ENCODE measurements at regions of chr22 and their contacts with region 1.

Region 1: DNA sequence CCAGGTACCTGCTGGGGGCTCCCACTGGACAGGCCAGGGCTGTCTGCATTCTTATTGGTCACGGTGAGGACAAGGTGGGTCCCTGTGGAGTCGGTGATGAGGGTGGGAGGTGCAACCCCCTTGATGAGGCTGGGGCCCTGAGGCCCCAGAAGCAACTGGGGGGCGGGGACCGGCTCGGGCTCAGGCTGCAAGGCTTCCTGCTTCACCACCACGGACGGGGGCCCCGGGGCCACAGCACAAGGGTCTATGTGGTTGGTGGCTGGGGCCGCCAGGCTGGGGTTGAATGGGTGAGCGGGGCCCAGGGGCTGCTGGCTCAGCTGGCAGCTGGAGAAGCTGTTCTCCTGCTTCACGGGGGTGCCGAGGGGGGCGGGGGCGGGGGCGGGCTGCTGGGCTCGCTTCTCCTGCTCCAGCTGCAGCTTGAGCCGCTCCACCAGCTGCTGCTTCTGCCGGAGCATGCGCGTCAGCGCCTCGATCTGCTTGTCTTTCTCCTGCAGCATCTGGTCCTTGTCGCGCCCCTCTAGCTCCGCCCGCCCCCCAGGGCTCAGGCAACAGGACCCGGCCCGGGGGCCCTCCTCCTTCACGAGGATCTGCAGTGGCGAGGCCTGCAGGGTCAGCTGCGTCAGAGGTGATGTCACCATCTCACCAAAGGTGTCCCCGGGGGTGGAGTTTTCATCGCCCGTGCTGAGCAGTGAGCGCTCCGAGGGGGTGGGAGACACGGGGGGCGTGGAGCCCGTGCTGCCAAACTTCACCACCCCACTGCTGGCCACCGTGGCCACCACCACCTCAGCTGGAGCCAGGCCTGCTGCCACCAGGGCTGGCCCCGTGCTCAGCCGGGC is 48.2 kb downstream of the SGSM3 start:
- DNase-seq: no peak
- ATAC-seq: no peak
- H3K4me3 ChIP-seq: no peak overlapping the region
- H3K27ac ChIP-seq: no peak overlapping the region
- H3K4me1 ChIP-seq: peaks cover 9 to 13% of the 10 kb centered on the region in 2 donors
- H3K27me3 ChIP-seq: no peaks in the 10 kb centered on the region
- CTCF ChIP-seq: no peak
- POLR2A ChIP-seq: no peak

Region 2: GRCh38 chr22:40310081-40310767 is 108.4 kb before region 1 on chr22:
- in situ Hi-C with region 1: loop called in 1 of 4 experiments (anchors 25 kb)
- intact Hi-C with region 1: no loop called
- DNase-seq: no peak
- ATAC-seq: no peak
- H3K4me3 ChIP-seq: no peak overlapping the region
- H3K27ac ChIP-seq: peak overlapping the region in 1 of 4 donors; percentile 10
- H3K4me1 ChIP-seq: peaks cover 0 to 7% of the 10 kb centered on the region in 2 donors
- H3K27me3 ChIP-seq: no peaks in the 10 kb centered on the region
- CTCF ChIP-seq: no peak
- POLR2A ChIP-seq: no peak

Measured in gastrocnemius medialis (tissue), 4 donors.